ENCODE measurements at regions of chr9 and their contacts with region 1.

Region 1: GRCh38 chr9:122904823-122905710 is at the start of gene RC3H2:
- DNase-seq: peak; percentile 93 to 100
- ATAC-seq: peak; percentile 88 to 96 (median 92)
- H3K4me3 ChIP-seq: peak within 1 kb of the TSS; percentile 81
- H3K4me3 Mint-ChIP-seq: peak within 1 kb of the TSS; percentile 93
- H3K27ac ChIP-seq: peak within 1 kb of the TSS; percentile 92
- H3K27ac Mint-ChIP-seq: peak within 1 kb of the TSS; percentile 94 to 96
- H3K4me1 ChIP-seq: peaks cover 14% of the 10 kb centered on the region
- H3K4me1 Mint-ChIP-seq: peaks cover 16 to 22% of the 10 kb centered on the region in 2 donors
- H3K27me3 ChIP-seq: no peaks in the 10 kb centered on the region
- H3K27me3 Mint-ChIP-seq: no peaks in the 10 kb centered on the region
- CTCF ChIP-seq: no peak
- total RNA-seq, gene RC3H2: 74.0 to 78.8 (median 77.3) TPM

Region 2: GRCh38 chr9:122931226-122932121 is 26.4 kb after region 1 on chr9 and contains the start of gene ZBTB26:
- intact Hi-C with region 1: loop called (anchors 1 kb)
- DNase-seq: peak; percentile 86 to 94
- ATAC-seq: peak; percentile 96 to 99 (median 98)
- H3K4me3 ChIP-seq: peak within 1 kb of the TSS; percentile 86
- H3K4me3 Mint-ChIP-seq: no peak within 1 kb of the TSS
- H3K27ac ChIP-seq: peak within 1 kb of the TSS; percentile 95
- H3K27ac Mint-ChIP-seq: no peak within 1 kb of the TSS
- H3K4me1 ChIP-seq: peaks cover 15% of the 10 kb centered on the region
- H3K4me1 Mint-ChIP-seq: peaks cover 14 to 16% of the 10 kb centered on the region in 2 donors
- H3K27me3 ChIP-seq: no peaks in the 10 kb centered on the region
- H3K27me3 Mint-ChIP-seq: no peaks in the 10 kb centered on the region
- CTCF ChIP-seq: no peak
- total RNA-seq, gene ZBTB26: 7.8 to 12.2 (median 9.2) TPM

Region 3: GRCh38 chr9:122940603-122941559 is 35.8 kb after region 1 on chr9 and contains the start of gene RABGAP1:
- intact Hi-C with region 1: loop called (anchors 1 kb)
- DNase-seq: peak; percentile 95 to 99
- ATAC-seq: peak; percentile 98 to 100 (median 98)
- H3K4me3 ChIP-seq: peak within 1 kb of the TSS; percentile 82
- H3K4me3 Mint-ChIP-seq: peak within 1 kb of the TSS; percentile 97
- H3K27ac ChIP-seq: peak within 1 kb of the TSS; percentile 80
- H3K27ac Mint-ChIP-seq: peak within 1 kb of the TSS; percentile 84 to 94
- H3K4me1 ChIP-seq: peaks cover 14% of the 10 kb centered on the region
- H3K4me1 Mint-ChIP-seq: peaks cover 19 to 23% of the 10 kb centered on the region in 2 donors
- H3K27me3 ChIP-seq: no peaks in the 10 kb centered on the region
- H3K27me3 Mint-ChIP-seq: no peaks in the 10 kb centered on the region
- CTCF ChIP-seq: no peak
- total RNA-seq, gene RABGAP1: 37.4 to 49.2 (median 43.0) TPM

Region 4: GRCh38 chr9:122991370-122991830 is 86.3 kb after region 1 on chr9:
- intact Hi-C with region 1: loop called (anchors 2 kb)
- DNase-seq: peak in 1 of 2 donors; percentile 68
- ATAC-seq: peak; percentile 69 to 85 (median 73)
- H3K4me3 ChIP-seq: no peak overlapping the region
- H3K4me3 Mint-ChIP-seq: no peak overlapping the region
- H3K27ac ChIP-seq: no peak overlapping the region
- H3K27ac Mint-ChIP-seq: no peak overlapping the region
- H3K4me1 ChIP-seq: no peaks in the 10 kb centered on the region
- H3K4me1 Mint-ChIP-seq: peaks cover 6% of the 10 kb centered on the region in 2 donors
- H3K27me3 ChIP-seq: no peaks in the 10 kb centered on the region
- H3K27me3 Mint-ChIP-seq: no peaks in the 10 kb centered on the region
- CTCF ChIP-seq: peak; percentile 72

Measured in natural killer cell (primary cell).